Pancreas (tissue), 10 donors: ENCODE measurements at regions of chr3 and their contacts with region 1.

Region 1: DNA sequence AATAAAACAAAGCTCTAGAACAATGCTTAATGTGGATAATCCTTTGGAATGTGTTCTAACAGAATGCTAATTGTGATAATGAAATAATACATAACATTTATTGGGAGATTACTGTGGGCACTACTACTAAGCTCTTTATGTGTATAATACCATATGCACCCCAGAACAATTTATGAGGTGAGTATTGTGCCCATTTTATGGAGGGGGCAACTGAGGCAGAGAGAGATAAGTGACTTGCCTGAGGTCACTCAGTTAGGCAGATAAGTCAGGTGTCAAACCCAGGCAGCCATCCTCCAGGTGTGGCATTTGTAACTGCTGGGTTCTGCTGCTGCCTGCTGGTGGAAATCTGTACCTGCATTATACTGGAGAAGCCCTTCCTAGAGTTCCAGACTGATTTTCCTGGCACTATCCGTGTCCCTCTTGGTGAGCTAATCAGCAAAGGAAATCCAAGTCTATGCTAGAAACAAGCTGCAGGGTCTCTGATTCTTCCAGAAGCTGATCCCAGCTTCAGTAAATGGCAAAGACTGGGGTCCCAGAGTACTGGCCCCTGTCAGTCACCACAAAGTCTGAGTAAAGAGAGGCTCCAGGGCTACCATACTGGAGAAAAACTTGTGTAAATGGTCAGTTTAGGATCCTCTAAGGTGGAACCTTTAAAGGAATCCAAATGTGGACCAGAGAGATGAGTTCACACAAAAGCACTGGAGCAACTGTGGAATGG is 22.6 kb upstream of the RBP1 start:
- DNase-seq: peak in 2 of 6 donors; percentile 48 to 71
- ATAC-seq: peak; percentile 79 to 89 (median 88)
- H3K4me3 ChIP-seq: no peak overlapping the region
- H3K27ac ChIP-seq: no peak overlapping the region
- H3K4me1 ChIP-seq: peaks cover 21 to 37% (median 26%) of the 10 kb centered on the region in 3 donors
- H3K27me3 ChIP-seq: no peaks in the 10 kb centered on the region
- CTCF ChIP-seq: peak; percentile 33 to 59 (median 45)

Region 2: DNA sequence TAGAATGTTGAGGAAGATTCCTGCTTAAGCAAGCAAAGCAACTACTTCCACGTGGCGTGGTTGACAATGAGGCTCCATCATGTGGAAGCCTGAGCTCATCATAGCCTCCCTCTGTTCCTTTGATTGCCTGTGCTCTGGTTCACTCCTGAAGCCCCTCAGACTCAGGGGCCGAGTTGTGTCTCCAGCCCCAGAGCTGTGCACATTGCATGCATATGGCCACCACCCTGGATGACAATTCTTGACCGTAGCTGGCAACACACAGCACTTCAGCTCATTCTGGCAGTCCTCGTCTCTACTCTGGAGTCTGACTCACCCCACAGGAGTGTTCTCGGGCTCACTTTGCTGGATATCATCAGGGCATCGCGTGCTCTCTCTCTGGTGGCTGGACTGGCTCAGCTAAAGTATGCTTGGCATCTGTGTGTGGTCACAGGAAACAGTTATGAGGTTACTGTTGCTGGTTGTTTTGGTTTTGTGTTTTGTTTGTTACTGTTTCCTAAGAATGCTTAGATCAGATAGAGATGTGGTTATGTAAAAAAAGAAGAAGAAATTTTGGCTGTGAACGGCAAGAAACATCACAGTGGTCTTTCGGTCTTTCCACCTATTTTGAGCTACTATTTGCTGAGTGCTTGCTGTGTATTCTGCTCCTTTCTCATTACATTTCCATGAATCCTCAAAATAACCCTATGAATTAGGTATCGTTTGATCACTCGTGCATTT is 259.9 kb before region 1 on chr3:
- intact Hi-C with region 1: no loop called
- DNase-seq: peak in 1 of 6 donors; percentile 39
- ATAC-seq: peak in 2 of 4 donors; percentile 7 to 23
- H3K4me3 ChIP-seq: no peak overlapping the region
- H3K27ac ChIP-seq: no peak overlapping the region
- H3K4me1 ChIP-seq: peaks cover 17 to 22% (median 19%) of the 10 kb centered on the region in 3 donors
- H3K27me3 ChIP-seq: no peaks in the 10 kb centered on the region
- CTCF ChIP-seq: no peak

Region 3: DNA sequence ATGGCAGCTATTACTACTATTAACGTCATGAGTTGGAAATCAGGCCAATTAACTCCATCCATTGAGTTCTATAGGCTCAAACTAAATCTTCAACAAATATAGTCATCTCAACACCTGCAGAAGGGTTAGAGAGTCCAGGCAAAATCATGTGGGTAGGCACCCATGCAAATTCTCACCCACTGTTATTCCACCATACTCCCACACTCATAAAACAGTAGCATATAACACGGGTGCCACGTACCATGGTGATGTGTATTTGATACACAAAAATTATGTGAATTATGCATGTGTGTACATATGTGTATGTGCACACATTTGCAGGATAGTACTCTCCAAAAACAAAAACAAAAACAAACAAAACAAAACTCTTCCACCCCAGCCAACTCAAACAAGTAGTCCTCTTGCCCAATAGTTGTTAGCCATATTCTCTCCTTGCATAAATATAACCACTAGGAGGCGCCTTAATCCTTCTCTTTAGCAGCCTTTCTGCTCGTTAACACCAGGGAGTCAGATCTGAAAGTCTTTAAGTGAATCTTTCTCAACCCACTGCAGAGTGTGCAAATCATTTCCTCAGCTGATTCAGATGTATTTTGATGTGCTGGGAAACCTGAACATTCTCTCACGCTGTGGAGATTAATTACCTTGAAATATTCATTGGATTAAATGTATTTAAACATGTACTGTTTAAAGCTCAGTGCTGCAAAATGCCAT is 134.7 kb before region 1 on chr3:
- intact Hi-C with region 1: loop called in 2 of 3 experiments (anchors 2 to 5 kb)
- DNase-seq: no peak
- ATAC-seq: peak; percentile 56 to 87 (median 82)
- H3K4me3 ChIP-seq: no peak overlapping the region
- H3K27ac ChIP-seq: no peak overlapping the region
- H3K4me1 ChIP-seq: peaks cover 16 to 22% (median 17%) of the 10 kb centered on the region in 3 donors
- H3K27me3 ChIP-seq: no peaks in the 10 kb centered on the region
- CTCF ChIP-seq: peak; percentile 72 to 81 (median 78)

Region 4: GRCh38 chr3:139448104-139448503 is 114.0 kb before region 1 on chr3:
- intact Hi-C with region 1: no loop called
- DNase-seq: no peak
- ATAC-seq: peak in 3 of 4 donors; percentile 42 to 72 (median 52)
- H3K4me3 ChIP-seq: no peak overlapping the region
- H3K27ac ChIP-seq: no peak overlapping the region
- H3K4me1 ChIP-seq: peaks cover 0 to 2% (median 0%) of the 10 kb centered on the region in 3 donors
- H3K27me3 ChIP-seq: no peaks in the 10 kb centered on the region
- CTCF ChIP-seq: no peak